PC-9 (cell line): ENCODE measurements at regions of chr10 and their contacts with region 1.

Region 1: GRCh38 chr10:60495338-60496055 is 105.8 kb upstream of the ANK3 start:
- DNase-seq: peak in 1 of 2 experiments; percentile 21
- H3K4me3 ChIP-seq: no peak overlapping the region
- H3K27ac ChIP-seq: no peak overlapping the region
- H3K4me1 ChIP-seq: no peaks in the 10 kb centered on the region
- H3K27me3 ChIP-seq: no peaks in the 10 kb centered on the region
- CTCF ChIP-seq: no peak

Region 2: GRCh38 chr10:60289800-60290199 is 205.7 kb before region 1 on chr10:
- CTCF ChIA-PET with region 1: interaction called, 11 read pairs
- POLR2A ChIA-PET with region 1: no interaction called
- intact Hi-C with region 1: no loop called
- DNase-seq: no peak
- H3K4me3 ChIP-seq: no peak overlapping the region
- H3K27ac ChIP-seq: no peak overlapping the region
- H3K4me1 ChIP-seq: no peaks in the 10 kb centered on the region
- H3K27me3 ChIP-seq: no peaks in the 10 kb centered on the region
- CTCF ChIP-seq: no peak

Region 3: GRCh38 chr10:60446851-60447250 is 48.6 kb before region 1 on chr10:
- CTCF ChIA-PET with region 1: no interaction called
- POLR2A ChIA-PET with region 1: no interaction called
- intact Hi-C with region 1: no loop called
- DNase-seq: peak; percentile 53 to 76
- H3K4me3 ChIP-seq: no peak overlapping the region
- H3K27ac ChIP-seq: 0 out of 2 replicates have a peak overlapping the region, but pooled peaks have one; percentile 3
- H3K4me1 ChIP-seq: peaks cover 13% of the 10 kb centered on the region
- H3K27me3 ChIP-seq: no peaks in the 10 kb centered on the region
- CTCF ChIP-seq: no peak

Region 4: DNA sequence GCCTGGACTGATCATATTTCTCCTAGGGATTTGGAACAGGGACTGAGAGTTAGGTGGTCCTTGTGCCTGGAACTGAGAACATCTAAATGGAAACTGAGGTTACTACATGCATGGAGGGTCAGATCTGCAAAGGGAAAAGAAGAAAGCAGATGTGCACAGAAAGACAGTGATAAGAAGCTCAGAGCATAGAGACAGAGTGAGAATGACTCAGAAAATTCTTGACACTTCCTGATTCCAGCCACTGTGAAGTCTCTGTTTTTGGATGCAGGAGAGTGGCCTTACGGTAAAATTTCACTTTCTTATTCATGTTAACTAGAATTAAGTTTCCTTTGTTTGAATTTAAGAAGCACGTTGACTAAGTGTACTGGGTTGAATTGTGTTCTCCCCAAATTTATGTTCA is 716.0 kb after region 1 on chr10:
- CTCF ChIA-PET with region 1: no interaction called
- POLR2A ChIA-PET with region 1: interaction called, 16 read pairs
- intact Hi-C with region 1: no loop called
- DNase-seq: no peak
- H3K4me3 ChIP-seq: no peak overlapping the region
- H3K27ac ChIP-seq: no peak overlapping the region
- H3K4me1 ChIP-seq: no peaks in the 10 kb centered on the region
- H3K27me3 ChIP-seq: no peaks in the 10 kb centered on the region
- CTCF ChIP-seq: no peak